AG04450 (cell line): ENCODE measurements at regions of chr3 and their contacts with region 1.

Region 1: GRCh38 chr3:187738331-187739093 is 6.8 kb downstream of the BCL6 start:
- DNase-seq: peak; percentile 80
- H3K4me3 ChIP-seq: peak overlapping the region; percentile 55
- H3K27ac ChIP-seq: peak overlapping the region; percentile 91
- H3K27me3 ChIP-seq: no peaks in the 10 kb centered on the region
- CTCF ChIP-seq: peak; percentile 85

Region 2: DNA sequence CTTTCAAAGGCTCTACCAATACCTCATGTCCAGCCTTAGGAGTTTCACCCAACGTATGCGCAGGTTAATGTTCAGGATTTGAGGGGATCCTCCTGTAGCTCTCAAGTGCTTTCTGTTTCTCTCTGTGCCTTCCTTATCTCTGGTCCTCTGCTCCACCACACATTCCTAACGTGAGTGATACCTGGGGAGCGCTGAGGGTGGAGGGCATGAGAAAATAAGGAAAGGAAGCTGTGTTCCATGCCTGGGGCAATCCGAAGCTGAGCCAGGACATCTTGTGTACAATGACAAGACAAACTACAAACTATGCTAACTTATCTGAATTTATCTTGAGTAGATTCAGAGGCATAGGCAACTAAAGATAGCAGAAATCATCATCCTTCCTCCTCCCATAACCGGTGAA is 204.7 kb before region 1 on chr3:
- CTCF ChIA-PET with region 1: no interaction called
- POLR2A ChIA-PET with region 1: no interaction called
- DNase-seq: no peak
- H3K4me3 ChIP-seq: no peak overlapping the region
- H3K27ac ChIP-seq: no peak overlapping the region
- H3K27me3 ChIP-seq: no peaks in the 10 kb centered on the region
- CTCF ChIP-seq: no peak

Region 3: DNA sequence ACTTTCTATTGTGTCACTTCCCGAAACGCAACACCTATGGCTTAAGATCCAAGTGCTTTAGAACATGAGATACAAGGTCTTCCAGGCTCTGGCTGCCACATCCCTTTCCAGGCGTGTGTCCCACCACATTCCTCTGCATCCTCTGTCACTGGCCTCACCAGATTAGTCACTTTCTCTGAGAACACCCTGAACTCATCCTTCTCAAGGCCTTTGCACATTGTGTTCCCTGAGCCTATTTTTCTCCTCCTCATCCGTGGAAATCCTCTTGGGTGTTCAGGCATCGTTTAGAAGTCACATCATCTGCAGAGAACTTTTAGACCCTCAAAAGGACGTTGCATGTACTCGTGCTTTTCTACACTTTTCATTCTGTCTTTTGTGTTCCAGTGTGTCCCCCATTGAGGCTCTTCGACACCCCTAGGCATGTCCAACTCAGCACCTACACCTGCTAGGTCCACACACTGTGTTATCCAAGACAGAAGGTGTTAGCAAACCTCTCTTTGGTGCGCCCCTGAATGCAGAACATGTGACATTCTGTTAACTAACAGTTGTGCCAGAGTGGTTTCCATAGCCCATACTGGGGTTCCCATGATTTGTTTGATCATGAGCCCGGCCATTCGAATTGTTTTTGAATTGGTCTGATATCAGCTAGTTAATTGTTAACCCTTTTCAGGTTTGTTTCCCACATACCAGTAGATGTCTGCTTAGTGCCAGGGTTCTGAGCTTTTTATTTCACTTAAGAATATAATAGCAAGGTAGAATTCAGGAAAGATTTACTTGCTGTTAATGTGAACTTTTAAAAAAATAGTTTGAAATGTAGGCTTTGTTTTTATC is 482.7 kb after region 1 on chr3:
- CTCF ChIA-PET with region 1: interaction called, 11 read pairs
- POLR2A ChIA-PET with region 1: no interaction called
- DNase-seq: no peak
- H3K4me3 ChIP-seq: no peak overlapping the region
- H3K27ac ChIP-seq: peak overlapping the region; percentile 13
- H3K27me3 ChIP-seq: no peaks in the 10 kb centered on the region
- CTCF ChIP-seq: no peak

Region 4: GRCh38 chr3:188284455-188285212 is 546.1 kb after region 1 on chr3:
- CTCF ChIA-PET with region 1: interaction called, 10 read pairs
- POLR2A ChIA-PET with region 1: no interaction called
- DNase-seq: no peak
- H3K4me3 ChIP-seq: no peak overlapping the region
- H3K27ac ChIP-seq: no peak overlapping the region
- H3K27me3 ChIP-seq: no peaks in the 10 kb centered on the region
- CTCF ChIP-seq: no peak

Region 5: GRCh38 chr3:188394623-188395022 is 656.1 kb after region 1 on chr3:
- CTCF ChIA-PET with region 1: interaction called, 10 read pairs
- POLR2A ChIA-PET with region 1: no interaction called
- DNase-seq: no peak
- H3K4me3 ChIP-seq: no peak overlapping the region
- H3K27ac ChIP-seq: no peak overlapping the region
- H3K27me3 ChIP-seq: no peaks in the 10 kb centered on the region
- CTCF ChIP-seq: no peak

Region 6: GRCh38 chr3:188671971-188672370 is 933.5 kb after region 1 on chr3:
- CTCF ChIA-PET with region 1: interaction called, 13 read pairs
- POLR2A ChIA-PET with region 1: interaction called, 5 read pairs
- DNase-seq: no peak
- H3K4me3 ChIP-seq: no peak overlapping the region
- H3K27ac ChIP-seq: no peak overlapping the region
- H3K27me3 ChIP-seq: no peaks in the 10 kb centered on the region
- CTCF ChIP-seq: no peak

Region 7: DNA sequence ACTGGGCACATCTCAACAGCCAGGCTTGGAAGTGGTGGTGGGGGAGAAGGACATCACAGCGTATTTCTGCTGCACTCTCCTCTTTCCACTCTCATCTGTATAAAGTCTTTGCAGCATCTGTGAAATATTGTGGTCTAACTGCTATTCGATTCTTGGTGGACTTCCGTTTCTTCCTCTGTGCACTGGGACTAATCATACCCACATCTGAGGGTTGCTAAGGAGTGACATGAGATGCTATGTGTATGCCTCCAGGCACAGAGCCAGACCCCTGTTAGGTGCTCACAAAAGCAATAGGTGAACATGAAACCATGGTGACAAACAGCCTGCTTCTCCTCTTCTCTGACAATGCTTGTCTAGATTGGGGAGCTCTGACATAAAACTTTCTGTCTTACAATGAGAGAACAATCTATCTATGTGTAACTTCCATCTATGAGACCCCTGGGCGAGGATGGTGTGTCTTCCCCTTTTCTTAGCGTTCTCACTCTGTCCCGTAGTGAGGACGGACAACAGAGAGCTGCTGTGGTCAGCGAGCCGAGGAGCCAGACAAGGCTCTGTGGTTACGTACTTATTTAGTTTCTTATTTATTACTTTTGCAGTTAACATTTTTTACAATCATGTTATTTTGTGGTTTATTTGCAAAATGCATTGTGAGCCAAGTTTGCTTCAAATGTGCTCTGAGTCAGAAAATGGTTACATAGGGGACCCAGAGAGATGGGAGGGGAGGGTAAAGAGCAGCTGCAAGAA is 1236.5 kb after region 1 on chr3:
- CTCF ChIA-PET with region 1: interaction called, 17 read pairs
- POLR2A ChIA-PET with region 1: no interaction called
- DNase-seq: no peak
- H3K4me3 ChIP-seq: peak overlapping the region; percentile 11; the same call in 1 of the 2 replicates
- H3K27ac ChIP-seq: peak overlapping the region; percentile 55
- H3K27me3 ChIP-seq: peaks cover 3% of the 10 kb centered on the region
- CTCF ChIP-seq: no peak